Left cardiac atrium (tissue), 4 donors: ENCODE measurements at regions of chr19 and their contacts with region 1.

Region 1: GRCh38 chr19:2750808-2751443 is 11.1 kb upstream of the SLC39A3 start:
- DNase-seq: no peak
- ATAC-seq: no peak

Region 2: GRCh38 chr19:2653710-2654707 is 96.9 kb before region 1 on chr19:
- intact Hi-C with region 1: loop called in 1 of 2 experiments (anchors 5 kb)
- DNase-seq: no peak
- ATAC-seq: peak in 1 of 2 donors; percentile 86